Activated CD4-positive, alpha-beta memory T cell treated with anti-CD3 and anti-CD28 coated beads, Interleukin-2, amount 10 ng/mL, durations not matched to agents 7 days and 5 days (primary cell): ENCODE measurements at regions of chr16 and their contacts with region 1.

Region 1: DNA sequence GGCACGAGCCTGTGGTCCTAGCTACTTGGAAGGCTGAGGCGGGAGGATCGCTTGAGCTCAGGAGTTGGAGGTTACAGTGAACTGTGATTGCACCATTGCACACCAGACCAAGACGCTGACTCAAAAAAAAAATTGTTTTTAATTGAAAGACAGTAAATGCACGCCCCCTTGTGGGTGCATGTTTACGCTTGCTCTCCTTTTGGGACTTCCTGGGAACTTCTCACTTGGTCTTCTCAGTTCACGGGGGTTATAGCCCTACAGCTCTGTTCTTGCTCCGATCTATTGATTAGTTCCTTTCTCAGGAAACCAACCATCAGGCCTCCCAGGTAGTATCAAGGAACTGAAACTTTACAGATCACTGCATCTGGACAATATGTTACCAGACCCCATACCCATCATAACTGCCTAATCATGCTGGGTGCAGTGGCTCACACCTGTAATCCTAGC is 14.2 kb upstream of the RIPOR1 start:
- DNase-seq: peak; percentile 87
- H3K4me3 Mint-ChIP-seq: no peak overlapping the region
- H3K27ac Mint-ChIP-seq: peak overlapping the region; percentile 61
- H3K4me1 Mint-ChIP-seq: peaks cover 23% of the 10 kb centered on the region
- H3K27me3 Mint-ChIP-seq: peaks cover 4% of the 10 kb centered on the region

Region 2: DNA sequence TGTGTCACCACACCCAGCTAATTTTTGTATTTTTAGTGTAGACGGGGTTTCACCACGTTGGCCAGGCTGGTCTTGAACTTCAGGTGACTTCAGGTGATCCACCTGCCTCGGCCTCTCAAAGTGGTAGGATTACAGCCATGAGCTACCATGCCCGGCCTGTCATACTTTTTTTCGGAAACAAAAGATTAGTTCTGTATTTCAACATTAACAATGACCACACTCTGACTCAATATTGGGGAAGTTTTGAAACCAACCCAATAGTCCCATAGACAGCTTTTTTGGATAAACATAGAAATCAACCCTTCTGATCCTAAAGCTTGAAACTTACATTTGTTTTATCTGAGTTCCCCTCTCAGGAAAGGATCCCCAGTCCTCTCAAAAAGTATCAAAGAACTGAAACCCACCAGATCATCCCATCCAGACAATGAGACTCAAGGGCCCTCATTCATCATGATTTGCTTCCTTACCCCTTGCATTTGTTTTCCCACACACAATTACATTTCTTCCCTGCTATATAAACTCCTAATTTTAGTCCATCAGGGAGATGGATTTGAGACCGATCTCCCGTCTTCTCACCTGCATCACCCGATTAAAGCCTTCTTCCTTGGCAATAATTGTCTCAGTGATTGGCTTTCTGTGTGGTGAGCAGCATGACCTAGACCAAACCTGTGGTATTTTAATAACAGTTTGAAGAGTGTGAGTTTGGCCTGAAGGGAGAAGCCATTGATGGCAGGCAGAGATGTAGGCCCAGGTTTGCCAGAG is 23.9 kb before region 1 on chr16:
- CTCF ChIA-PET with region 1: interaction called, 261 read pairs
- POLR2A ChIA-PET with region 1: interaction called, 17 read pairs
- DNase-seq: no peak
- H3K4me3 Mint-ChIP-seq: no peak overlapping the region
- H3K27ac Mint-ChIP-seq: no peak overlapping the region
- H3K4me1 Mint-ChIP-seq: peaks cover 7% of the 10 kb centered on the region
- H3K27me3 Mint-ChIP-seq: no peaks in the 10 kb centered on the region

Region 3: GRCh38 chr16:67499106-67499505 is 15.3 kb before region 1 on chr16:
- CTCF ChIA-PET with region 1: interaction called, 261 read pairs
- POLR2A ChIA-PET with region 1: interaction called, 17 read pairs
- DNase-seq: no peak
- H3K4me3 Mint-ChIP-seq: no peak overlapping the region
- H3K27ac Mint-ChIP-seq: peak overlapping the region; percentile 51
- H3K4me1 Mint-ChIP-seq: peaks cover 30% of the 10 kb centered on the region
- H3K27me3 Mint-ChIP-seq: no peaks in the 10 kb centered on the region

Region 4: DNA sequence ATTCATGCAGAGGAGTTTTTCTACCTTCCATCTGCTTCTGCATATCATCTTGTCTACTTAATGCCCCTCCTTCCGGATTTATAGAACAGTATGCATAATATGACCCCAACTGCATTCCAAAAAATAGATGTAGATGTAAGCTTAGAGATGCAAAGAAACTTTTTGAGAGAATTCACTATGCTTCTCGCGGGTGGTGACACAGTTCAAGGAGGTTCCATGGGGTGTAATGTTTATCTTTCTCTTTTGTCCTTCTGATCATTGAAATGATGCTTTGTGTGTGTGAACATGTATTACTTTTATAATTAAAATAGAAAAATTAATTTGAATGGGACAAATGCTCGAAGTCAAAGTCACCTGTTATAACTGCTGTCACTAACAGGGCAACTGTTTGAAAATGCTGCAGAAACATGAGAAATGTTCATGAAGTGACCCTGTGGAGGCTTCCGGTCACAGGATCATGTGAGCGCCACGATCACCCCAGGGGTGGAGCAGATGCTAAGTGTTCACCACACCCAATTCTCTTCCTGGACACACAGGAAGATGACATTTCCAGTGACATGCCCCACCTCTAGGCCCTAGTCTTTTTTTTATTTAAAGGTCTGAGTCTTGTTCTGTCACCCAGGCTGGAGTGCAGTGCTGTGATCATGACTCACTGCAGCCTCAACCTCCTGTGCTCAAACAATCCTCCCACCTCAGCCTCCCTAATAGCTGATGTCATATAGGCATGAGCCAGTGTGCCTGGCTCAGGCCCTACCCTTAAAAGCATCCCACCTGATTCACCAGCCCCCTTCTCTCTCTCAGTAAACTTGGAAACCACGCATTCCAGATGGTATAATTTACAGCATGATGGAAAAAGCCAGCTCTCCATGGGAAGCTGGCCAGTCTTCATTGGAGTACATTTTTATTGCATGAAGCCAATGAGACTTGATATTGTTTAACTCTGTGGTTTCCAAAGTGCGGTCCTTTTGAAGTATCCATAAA is 10.1 kb before region 1 on chr16:
- CTCF ChIA-PET with region 1: interaction called, 261 read pairs
- POLR2A ChIA-PET with region 1: interaction called, 8 read pairs
- DNase-seq: peak; percentile 85
- H3K4me3 Mint-ChIP-seq: no peak overlapping the region
- H3K27ac Mint-ChIP-seq: peak overlapping the region; percentile 97
- H3K4me1 Mint-ChIP-seq: peaks cover 49% of the 10 kb centered on the region
- H3K27me3 Mint-ChIP-seq: no peaks in the 10 kb centered on the region

Region 5: DNA sequence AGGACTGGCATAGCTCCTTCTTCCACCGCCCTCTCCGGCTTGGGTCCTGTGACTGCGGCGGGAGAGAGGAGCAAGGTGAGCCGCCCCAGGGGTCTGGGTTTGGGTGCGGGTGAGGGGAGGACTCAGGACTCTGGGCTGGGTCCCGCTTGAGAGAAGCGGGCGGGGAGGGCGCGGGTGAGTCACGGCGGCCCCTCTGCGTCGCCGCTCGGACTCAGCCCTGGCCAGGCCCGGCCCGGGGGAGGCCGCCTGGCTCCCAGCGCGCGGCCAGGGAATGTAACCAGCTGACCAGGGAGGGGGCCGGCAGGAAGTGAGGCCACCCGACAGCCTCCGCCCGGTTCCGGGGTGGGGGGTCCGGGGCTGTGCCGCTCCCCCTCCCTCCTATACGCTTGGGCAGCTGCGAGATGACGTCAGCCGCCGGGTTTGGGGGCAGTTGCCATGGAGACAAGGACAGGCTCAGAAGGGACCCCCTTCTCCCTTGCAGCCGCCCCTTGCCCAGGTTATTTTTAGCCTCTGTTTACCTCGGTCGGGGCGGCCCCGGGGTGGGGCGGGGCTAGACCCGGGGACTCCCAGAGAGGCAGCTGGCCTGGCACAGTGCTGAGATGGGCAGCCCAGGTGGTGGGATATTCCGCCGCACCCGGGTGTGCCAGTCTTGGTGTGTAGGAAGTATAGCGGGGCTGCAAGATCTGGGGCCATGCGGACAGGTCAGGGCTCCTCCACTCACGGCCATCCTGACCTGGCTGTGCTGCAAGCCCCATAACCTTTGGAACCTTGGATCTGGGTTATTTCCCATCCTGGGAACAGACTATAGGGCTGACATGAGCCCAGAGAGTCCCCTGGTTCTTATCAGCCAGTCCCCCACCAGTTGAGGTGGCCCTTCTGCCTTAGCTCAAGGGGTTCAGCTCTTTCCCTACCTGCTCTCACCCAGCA is 15.9 kb after region 1 on chr16:
- CTCF ChIA-PET with region 1: interaction called, 16 read pairs
- POLR2A ChIA-PET with region 1: interaction called, 3 read pairs
- DNase-seq: no peak
- H3K4me3 Mint-ChIP-seq: peak overlapping the region; percentile 56
- H3K27ac Mint-ChIP-seq: no peak overlapping the region
- H3K4me1 Mint-ChIP-seq: peaks cover 16% of the 10 kb centered on the region
- H3K27me3 Mint-ChIP-seq: peaks cover 50% of the 10 kb centered on the region

Region 6: GRCh38 chr16:67651774-67652231 is 137.4 kb after region 1 on chr16:
- CTCF ChIA-PET with region 1: no interaction called
- POLR2A ChIA-PET with region 1: no interaction called
- DNase-seq: no peak
- H3K4me3 Mint-ChIP-seq: no peak overlapping the region
- H3K27ac Mint-ChIP-seq: no peak overlapping the region
- H3K4me1 Mint-ChIP-seq: peaks cover 14% of the 10 kb centered on the region
- H3K27me3 Mint-ChIP-seq: no peaks in the 10 kb centered on the region

Region 7: DNA sequence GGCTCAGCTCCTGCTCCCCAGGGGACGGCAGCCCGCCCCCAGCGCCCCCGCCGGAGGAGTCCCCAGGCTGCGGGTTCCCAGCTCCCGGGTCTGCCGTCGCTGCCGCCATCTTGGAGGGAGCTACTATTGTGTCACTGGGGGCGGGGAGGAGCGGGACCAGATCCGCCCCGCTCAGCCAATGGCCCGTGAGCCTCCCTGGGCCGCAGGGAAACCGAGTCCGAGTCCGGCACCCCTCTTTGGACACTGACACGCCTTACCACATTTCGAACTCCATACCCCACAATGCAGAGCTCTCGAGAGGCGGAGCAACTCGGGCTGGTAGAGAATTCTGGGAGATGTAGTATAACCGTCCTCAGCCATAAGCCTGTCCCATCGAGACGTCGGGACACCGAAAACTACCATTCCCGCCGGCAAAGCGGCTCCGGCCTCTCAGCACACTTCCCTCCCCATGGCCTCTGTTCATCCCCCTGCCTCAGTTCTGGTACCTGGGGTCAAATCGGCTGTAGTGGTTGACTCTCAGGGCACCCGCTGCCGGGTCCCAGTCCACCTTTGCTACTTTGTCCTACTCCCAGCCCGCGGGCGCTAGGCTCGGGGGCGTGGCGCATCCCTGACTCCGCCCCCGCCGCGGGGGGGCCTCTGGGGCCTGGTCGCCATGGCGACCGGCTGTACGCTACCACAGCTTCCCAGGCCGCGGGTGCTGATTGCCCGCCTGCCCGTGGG is 292.2 kb after region 1 on chr16 and contains the starts of genes RANBP10 and TSNAXIP1:
- CTCF ChIA-PET with region 1: no interaction called
- POLR2A ChIA-PET with region 1: no interaction called
- DNase-seq: peak; percentile 98
- H3K4me3 Mint-ChIP-seq: peak within 1 kb of the TSS; percentile 90
- H3K27ac Mint-ChIP-seq: peak within 1 kb of the TSS; percentile 86
- H3K4me1 Mint-ChIP-seq: peaks cover 40% of the 10 kb centered on the region
- H3K27me3 Mint-ChIP-seq: no peaks in the 10 kb centered on the region
- total RNA-seq, gene RANBP10: 23.2 to 24.3 TPM
- total RNA-seq, gene TSNAXIP1: 0.20 to 0.25 TPM